Naive thymus-derived CD4-positive, alpha-beta T cell (primary cell): ENCODE measurements at regions of chr1 and their contacts with region 1.

Region 1: DNA sequence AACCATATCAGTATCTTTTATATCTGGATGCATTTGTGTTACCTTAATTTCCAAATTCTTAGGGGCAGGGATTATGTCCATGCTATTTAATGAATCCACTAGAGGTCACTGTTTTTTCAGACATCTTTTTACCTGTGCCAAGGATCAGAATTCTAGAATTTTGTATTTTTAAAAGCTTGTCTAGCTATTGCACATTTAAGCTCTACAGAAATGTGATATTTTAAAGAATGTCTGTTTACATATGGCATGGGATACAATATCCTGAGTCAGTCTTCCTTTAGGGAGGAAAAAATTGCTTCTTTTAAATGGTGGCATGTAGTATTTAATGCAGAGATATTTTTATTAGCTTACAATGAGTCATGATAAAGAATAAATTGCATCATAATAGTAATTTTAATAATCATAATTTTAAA is 11.3 kb downstream of the RPAP2 start:
- DNase-seq: peak in 5 of 9 donors; percentile 32 to 48 (median 47)
- ATAC-seq: peak; percentile 66
- H3K4me3 ChIP-seq: no peak overlapping the region
- H3K4me3 Mint-ChIP-seq: no peak overlapping the region
- H3K27ac ChIP-seq: no peak overlapping the region
- H3K27ac Mint-ChIP-seq: no peak overlapping the region
- H3K4me1 ChIP-seq: peaks cover 15 to 18% of the 10 kb centered on the region in 2 donors
- H3K4me1 Mint-ChIP-seq: peaks cover 13 to 42% (median 33%) of the 10 kb centered on the region in 7 donors
- H3K27me3 ChIP-seq: no peaks in the 10 kb centered on the region
- H3K27me3 Mint-ChIP-seq: no peaks in the 10 kb centered on the region

Region 2: GRCh38 chr1:92298573-92299476 is 11.4 kb before region 1 on chr1 and contains the starts of genes GLMN and RPAP2:
- CTCF ChIA-PET with region 1: interaction called, 7 read pairs
- POLR2A ChIA-PET with region 1: interaction called, 5 read pairs
- intact Hi-C with region 1: loop called in 1 of 2 experiments (anchors 1 kb)
- DNase-seq: peak; percentile 55 to 86 (median 75)
- ATAC-seq: peak; percentile 97
- H3K4me3 ChIP-seq: peak within 1 kb of the TSS; percentile 93
- H3K4me3 Mint-ChIP-seq: peak within 1 kb of the TSS; percentile 93 to 99 (median 97)
- H3K27ac ChIP-seq: peak within 1 kb of the TSS; percentile 98
- H3K27ac Mint-ChIP-seq: peak within 1 kb of the TSS; percentile 91 to 99 (median 97)
- H3K4me1 ChIP-seq: peaks cover 10 to 19% of the 10 kb centered on the region in 2 donors
- H3K4me1 Mint-ChIP-seq: peaks cover 30 to 61% (median 48%) of the 10 kb centered on the region in 7 donors
- H3K27me3 ChIP-seq: no peaks in the 10 kb centered on the region
- H3K27me3 Mint-ChIP-seq: no peaks in the 10 kb centered on the region
- total RNA-seq, gene GLMN: 13.9 to 27.0 (median 14.3) TPM
- total RNA-seq, gene RPAP2: 29.5 to 50.7 (median 42.3) TPM

Region 3: GRCh38 chr1:92461364-92462097 is 151.3 kb after region 1 on chr1:
- CTCF ChIA-PET with region 1: no interaction called
- POLR2A ChIA-PET with region 1: no interaction called
- intact Hi-C with region 1: loop called in 1 of 2 experiments (anchors 5 kb)
- DNase-seq: no peak
- ATAC-seq: peak; percentile 18
- H3K4me3 ChIP-seq: no peak overlapping the region
- H3K4me3 Mint-ChIP-seq: peak overlapping the region in 3 of 10 donors; percentile 8 to 49 (median 32)
- H3K27ac ChIP-seq: no peak overlapping the region
- H3K27ac Mint-ChIP-seq: peak overlapping the region in 1 of 9 donors; percentile 68
- H3K4me1 ChIP-seq: peaks cover 23 to 27% of the 10 kb centered on the region in 2 donors
- H3K4me1 Mint-ChIP-seq: peaks cover 30 to 63% (median 57%) of the 10 kb centered on the region in 7 donors
- H3K27me3 ChIP-seq: no peaks in the 10 kb centered on the region
- H3K27me3 Mint-ChIP-seq: no peaks in the 10 kb centered on the region

Region 4: GRCh38 chr1:92623187-92623778 is 313.1 kb after region 1 on chr1:
- CTCF ChIA-PET with region 1: interaction called, 14 read pairs
- POLR2A ChIA-PET with region 1: no interaction called
- intact Hi-C with region 1: loop called (anchors 1 kb)
- DNase-seq: peak in 6 of 9 donors; percentile 4 to 42 (median 35)
- ATAC-seq: peak; percentile 49
- H3K4me3 ChIP-seq: no peak overlapping the region
- H3K4me3 Mint-ChIP-seq: no peak overlapping the region
- H3K27ac ChIP-seq: no peak overlapping the region
- H3K27ac Mint-ChIP-seq: no peak overlapping the region
- H3K4me1 ChIP-seq: no peaks in the 10 kb centered on the region
- H3K4me1 Mint-ChIP-seq: no peaks in the 10 kb centered on the region
- H3K27me3 ChIP-seq: no peaks in the 10 kb centered on the region
- H3K27me3 Mint-ChIP-seq: peaks cover 0 to 4% (median 0%) of the 10 kb centered on the region in 5 donors

Region 5: GRCh38 chr1:93328809-93329760 is 1018.9 kb after region 1 on chr1:
- CTCF ChIA-PET with region 1: no interaction called
- POLR2A ChIA-PET with region 1: no interaction called
- intact Hi-C with region 1: no loop called
- DNase-seq: no peak
- ATAC-seq: no peak
- H3K4me3 ChIP-seq: no peak overlapping the region
- H3K4me3 Mint-ChIP-seq: no peak overlapping the region
- H3K27ac ChIP-seq: no peak overlapping the region
- H3K27ac Mint-ChIP-seq: no peak overlapping the region
- H3K4me1 ChIP-seq: no peaks in the 10 kb centered on the region
- H3K4me1 Mint-ChIP-seq: peaks cover 0 to 2% (median 0%) of the 10 kb centered on the region in 7 donors
- H3K27me3 ChIP-seq: no peaks in the 10 kb centered on the region
- H3K27me3 Mint-ChIP-seq: no peaks in the 10 kb centered on the region